AG04450 (cell line): ENCODE measurements at regions of chr12 and their contacts with region 1.

Region 1: GRCh38 chr12:4763549-4763948 is 43.3 kb downstream of the GALNT8 start:
- DNase-seq: no peak
- H3K4me3 ChIP-seq: no peak overlapping the region
- H3K27ac ChIP-seq: no peak overlapping the region
- H3K27me3 ChIP-seq: no peaks in the 10 kb centered on the region
- CTCF ChIP-seq: no peak

Region 2: GRCh38 chr12:4307593-4308333 is 455.8 kb before region 1 on chr12:
- CTCF ChIA-PET with region 1: interaction called, 14 read pairs
- POLR2A ChIA-PET with region 1: no interaction called
- DNase-seq: peak; percentile 55
- H3K4me3 ChIP-seq: peak overlapping the region; percentile 17; the same call in 1 of the 2 replicates
- H3K27ac ChIP-seq: no peak overlapping the region
- H3K27me3 ChIP-seq: peaks cover 14% of the 10 kb centered on the region
- CTCF ChIP-seq: peak; percentile 79

Region 3: DNA sequence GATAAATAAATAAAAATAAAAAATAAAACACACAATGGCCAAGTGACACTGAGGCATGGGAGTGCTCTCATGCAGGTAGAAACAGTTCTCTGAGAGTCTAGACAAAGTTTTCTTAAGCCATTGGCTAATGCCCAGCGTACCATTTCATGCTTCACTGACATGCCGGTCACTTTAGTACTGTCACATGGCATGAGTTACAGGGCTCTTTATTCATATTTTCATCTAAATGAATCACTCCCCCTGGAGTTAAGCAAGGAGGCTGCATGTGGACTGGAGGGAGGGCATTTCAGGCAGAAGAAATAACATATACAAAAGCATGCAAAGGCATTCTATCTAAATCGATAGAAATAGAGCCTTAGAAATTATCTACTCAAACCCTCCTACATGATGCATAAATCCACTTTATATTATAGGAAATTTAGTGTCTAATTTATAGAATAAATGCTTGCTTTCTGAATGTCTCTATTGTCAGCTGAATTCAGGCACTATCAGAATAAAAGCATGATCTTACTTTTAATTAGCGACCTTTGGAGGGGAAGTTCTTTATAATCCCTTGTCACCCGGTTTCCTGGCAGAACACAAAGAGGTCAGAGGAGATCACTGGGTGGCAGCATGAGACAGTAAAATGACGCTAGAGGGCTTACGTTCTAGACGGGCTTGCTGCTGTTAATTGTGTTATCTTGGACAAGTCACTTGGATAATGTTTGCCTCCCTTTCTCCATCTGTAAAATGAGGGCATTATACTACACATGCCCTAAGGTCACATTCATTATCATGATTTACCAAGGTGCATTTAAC is 184.0 kb before region 1 on chr12:
- CTCF ChIA-PET with region 1: interaction called, 10 read pairs
- POLR2A ChIA-PET with region 1: no interaction called
- DNase-seq: no peak
- H3K4me3 ChIP-seq: no peak overlapping the region
- H3K27ac ChIP-seq: no peak overlapping the region
- H3K27me3 ChIP-seq: peaks cover 3% of the 10 kb centered on the region
- CTCF ChIP-seq: 0 out of 2 replicates have a peak, but pooled peaks have one; percentile 7

Region 4: DNA sequence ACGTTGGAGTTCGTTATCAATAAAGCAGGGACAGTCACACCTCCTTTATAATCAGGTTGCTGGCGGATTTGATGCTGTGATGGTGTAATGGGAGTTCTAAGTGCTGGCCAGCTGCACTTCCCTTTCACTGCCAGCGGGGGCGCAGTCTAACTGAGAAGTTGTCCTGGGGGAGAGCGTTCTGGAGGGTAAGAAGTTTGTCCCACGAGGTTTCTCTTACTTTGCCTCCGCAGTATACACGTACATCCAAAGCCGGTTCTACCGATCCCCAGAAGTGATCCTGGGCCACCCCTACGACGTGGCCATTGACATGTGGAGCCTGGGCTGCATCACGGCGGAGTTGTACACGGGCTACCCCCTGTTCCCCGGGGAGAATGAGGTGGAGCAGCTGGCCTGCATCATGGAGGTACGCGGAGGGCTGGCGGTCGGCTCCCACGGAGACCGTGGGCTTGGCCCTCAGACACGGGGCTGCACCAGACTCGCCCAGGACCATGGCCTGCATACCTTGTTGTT is 158.8 kb before region 1 on chr12:
- CTCF ChIA-PET with region 1: interaction called, 16 read pairs
- POLR2A ChIA-PET with region 1: no interaction called
- DNase-seq: peak; percentile 68
- H3K4me3 ChIP-seq: peak overlapping the region; percentile 75
- H3K27ac ChIP-seq: peak overlapping the region; percentile 25
- H3K27me3 ChIP-seq: peaks cover 6% of the 10 kb centered on the region
- CTCF ChIP-seq: peak; percentile 100

Region 5: GRCh38 chr12:4775936-4776335 is 12.4 kb after region 1 on chr12:
- CTCF ChIA-PET with region 1: interaction called, 10 read pairs
- POLR2A ChIA-PET with region 1: no interaction called
- DNase-seq: no peak
- H3K4me3 ChIP-seq: no peak overlapping the region
- H3K27ac ChIP-seq: no peak overlapping the region
- H3K27me3 ChIP-seq: peaks cover 2% of the 10 kb centered on the region
- CTCF ChIP-seq: no peak

Region 6: GRCh38 chr12:4843907-4844306 is 80.4 kb after region 1 on chr12:
- CTCF ChIA-PET with region 1: no interaction called
- POLR2A ChIA-PET with region 1: no interaction called
- DNase-seq: no peak
- H3K4me3 ChIP-seq: no peak overlapping the region
- H3K27ac ChIP-seq: no peak overlapping the region
- H3K27me3 ChIP-seq: peaks cover 2% of the 10 kb centered on the region
- CTCF ChIP-seq: no peak